Activated T-helper 2 cell treated with anti-CD3 and anti-CD28 coated beads, Interferon-gamma antibody, Interleukin-2, Interleukin-4, amounts not matched to agents 10 μg/mL and 5 μg/mL and 100 μg/mL, durations not matched to agents 14 hours and 24 hours and 36 hours (primary cell): ENCODE measurements at regions of chr1 and their contacts with region 1.

Region 1: GRCh38 chr1:154352581-154353459 is 27.5 kb downstream of the ATP8B2 start:
- DNase-seq: peak; percentile 32
- H3K4me3 Mint-ChIP-seq: peak overlapping the region; percentile 76
- H3K27ac Mint-ChIP-seq: peak overlapping the region; percentile 80
- H3K4me1 Mint-ChIP-seq: peaks cover 26% of the 10 kb centered on the region
- H3K27me3 Mint-ChIP-seq: peaks cover 3% of the 10 kb centered on the region

Region 2: DNA sequence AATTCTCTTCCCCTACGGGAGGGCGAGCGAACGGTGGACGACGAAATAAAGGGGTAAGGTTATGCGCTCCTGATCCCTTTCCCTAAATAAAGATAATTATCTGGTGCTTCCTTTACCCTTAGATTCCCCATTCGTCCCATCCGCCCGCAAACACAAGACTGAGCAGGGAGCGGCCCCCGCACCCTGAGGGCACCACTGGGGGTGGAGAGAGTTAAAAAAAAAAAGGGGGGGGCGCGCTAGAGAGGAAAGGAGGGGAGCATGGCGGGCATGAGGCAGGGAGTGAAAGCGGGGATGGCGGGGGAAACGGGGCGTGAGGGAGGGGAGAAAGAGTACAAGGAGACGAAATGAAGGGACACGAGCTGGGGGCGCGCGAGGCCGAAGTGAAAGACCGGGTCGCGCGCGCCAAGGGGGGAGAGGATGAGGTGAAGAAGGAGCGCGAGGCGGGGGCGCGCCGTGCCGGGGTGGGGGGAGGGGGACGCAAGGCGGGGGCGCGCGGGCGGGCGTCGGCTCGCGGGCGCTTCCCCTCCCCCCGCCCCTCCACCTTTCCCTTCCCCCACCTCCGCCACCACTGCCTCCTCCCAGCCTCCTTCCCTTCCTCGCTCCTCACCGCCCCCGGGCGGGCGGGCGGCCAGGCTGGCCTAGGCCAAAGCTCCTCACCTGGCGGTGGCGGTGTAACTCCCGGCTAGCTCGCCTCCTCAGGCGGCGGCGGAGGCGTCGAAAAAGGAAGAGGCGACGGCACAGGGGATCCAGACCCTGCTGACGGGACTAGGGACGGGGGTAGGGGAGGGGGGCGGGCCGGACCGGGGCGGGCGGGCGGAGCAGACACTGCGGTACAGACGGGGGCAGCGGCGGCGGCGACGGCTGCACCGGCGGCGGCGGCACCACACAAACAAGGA is 430.5 kb before region 1 on chr1:
- intact Hi-C with region 1: no loop called
- DNase-seq: no peak
- H3K4me3 Mint-ChIP-seq: peak overlapping the region; percentile 94
- H3K27ac Mint-ChIP-seq: peak overlapping the region; percentile 94
- H3K4me1 Mint-ChIP-seq: peaks cover 34% of the 10 kb centered on the region
- H3K27me3 Mint-ChIP-seq: no peaks in the 10 kb centered on the region

Region 3: GRCh38 chr1:154324669-154325582 is 27.9 kb before region 1 on chr1 and contains the start of gene ATP8B2:
- intact Hi-C with region 1: loop called (anchors 1 kb)
- DNase-seq: peak; percentile 77
- H3K4me3 Mint-ChIP-seq: peak within 1 kb of the TSS; percentile 95
- H3K27ac Mint-ChIP-seq: peak within 1 kb of the TSS; percentile 89
- H3K4me1 Mint-ChIP-seq: peaks cover 33% of the 10 kb centered on the region
- H3K27me3 Mint-ChIP-seq: peaks cover 18% of the 10 kb centered on the region
- total RNA-seq, gene ATP8B2: 44.0 and 47.0 TPM in 2 replicates

Region 4: DNA sequence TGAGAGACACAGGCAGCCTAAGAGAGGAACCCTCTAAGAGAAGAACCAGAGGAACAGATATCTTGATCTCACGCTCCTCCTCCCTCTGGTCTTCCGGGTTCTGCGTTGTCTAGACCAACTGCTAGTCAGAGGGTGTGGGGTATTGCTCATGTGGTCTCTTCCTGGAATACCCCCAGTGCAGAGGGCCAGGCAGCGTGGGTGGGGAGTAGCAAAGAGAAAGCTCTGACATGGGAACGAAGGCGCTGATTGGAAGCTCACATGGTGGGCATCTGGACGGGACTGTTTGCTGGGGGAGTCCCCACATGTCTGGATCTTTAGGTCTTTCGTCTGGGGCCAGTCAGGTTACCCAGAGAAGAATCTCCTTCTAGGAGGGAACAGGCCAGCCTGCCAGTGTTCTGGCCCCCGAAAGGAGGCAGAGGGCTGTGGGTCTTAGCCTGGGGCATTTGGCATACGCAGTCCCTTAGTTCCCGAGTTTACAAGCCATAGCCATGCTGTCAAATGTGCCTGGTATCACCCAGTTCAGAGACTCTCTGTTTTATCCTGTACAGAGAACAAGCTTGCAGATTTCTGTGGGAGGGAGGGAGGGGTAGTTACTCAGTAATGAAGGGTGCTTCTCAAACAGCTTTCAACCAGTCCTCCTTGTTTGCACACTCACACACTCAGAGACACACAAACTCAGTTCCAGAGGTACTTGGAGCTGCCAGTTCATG is 34.0 kb after region 1 on chr1:
- intact Hi-C with region 1: loop called (anchors 5 kb)
- DNase-seq: peak; percentile 32
- H3K4me3 Mint-ChIP-seq: peak overlapping the region; percentile 57
- H3K27ac Mint-ChIP-seq: peak overlapping the region; percentile 91
- H3K4me1 Mint-ChIP-seq: peaks cover 22% of the 10 kb centered on the region
- H3K27me3 Mint-ChIP-seq: no peaks in the 10 kb centered on the region

Region 5: DNA sequence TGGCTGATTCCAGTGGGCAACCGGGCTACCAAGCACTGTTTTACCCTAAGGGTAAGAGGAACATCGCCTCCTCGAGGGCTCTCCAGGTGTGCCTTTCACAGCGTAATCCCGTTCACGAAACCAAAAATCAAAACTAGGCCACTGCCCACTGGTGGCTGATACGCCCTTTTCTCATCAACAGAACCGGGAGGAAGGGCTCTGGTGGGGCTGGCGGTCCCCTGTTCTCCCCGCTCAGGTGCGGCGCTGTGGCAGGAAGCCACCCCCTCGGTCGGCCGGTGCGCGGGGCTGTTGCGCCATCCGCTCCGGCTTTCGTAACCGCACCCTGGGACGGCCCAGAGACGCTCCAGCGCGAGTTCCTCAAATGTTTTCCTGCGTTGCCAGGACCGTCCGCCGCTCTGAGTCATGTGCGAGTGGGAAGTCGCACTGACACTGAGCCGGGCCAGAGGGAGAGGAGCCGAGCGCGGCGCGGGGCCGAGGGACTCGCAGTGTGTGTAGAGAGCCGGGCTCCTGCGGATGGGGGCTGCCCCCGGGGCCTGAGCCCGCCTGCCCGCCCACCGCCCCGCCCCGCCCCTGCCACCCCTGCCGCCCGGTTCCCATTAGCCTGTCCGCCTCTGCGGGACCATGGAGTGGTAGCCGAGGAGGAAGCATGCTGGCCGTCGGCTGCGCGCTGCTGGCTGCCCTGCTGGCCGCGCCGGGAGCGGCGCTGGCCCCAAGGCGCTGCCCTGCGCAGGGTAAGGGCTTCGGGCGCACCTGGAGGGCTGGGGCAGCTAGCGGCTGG is 52.4 kb after region 1 on chr1 and contains the start of gene IL6R:
- intact Hi-C with region 1: loop called (anchors 5 kb)
- DNase-seq: peak; percentile 48
- H3K4me3 Mint-ChIP-seq: peak within 1 kb of the TSS; percentile 73
- H3K27ac Mint-ChIP-seq: peak within 1 kb of the TSS; percentile 64
- H3K4me1 Mint-ChIP-seq: peaks cover 66% of the 10 kb centered on the region
- H3K27me3 Mint-ChIP-seq: peaks cover 6% of the 10 kb centered on the region
- total RNA-seq, gene IL6R: 1.6 and 2.2 TPM in 2 replicates

Region 6: GRCh38 chr1:154419620-154420571 is 67.1 kb after region 1 on chr1:
- intact Hi-C with region 1: no loop called
- DNase-seq: no peak
- H3K4me3 Mint-ChIP-seq: no peak overlapping the region
- H3K27ac Mint-ChIP-seq: peak overlapping the region; percentile 29
- H3K4me1 Mint-ChIP-seq: peaks cover 23% of the 10 kb centered on the region
- H3K27me3 Mint-ChIP-seq: no peaks in the 10 kb centered on the region

Region 7: DNA sequence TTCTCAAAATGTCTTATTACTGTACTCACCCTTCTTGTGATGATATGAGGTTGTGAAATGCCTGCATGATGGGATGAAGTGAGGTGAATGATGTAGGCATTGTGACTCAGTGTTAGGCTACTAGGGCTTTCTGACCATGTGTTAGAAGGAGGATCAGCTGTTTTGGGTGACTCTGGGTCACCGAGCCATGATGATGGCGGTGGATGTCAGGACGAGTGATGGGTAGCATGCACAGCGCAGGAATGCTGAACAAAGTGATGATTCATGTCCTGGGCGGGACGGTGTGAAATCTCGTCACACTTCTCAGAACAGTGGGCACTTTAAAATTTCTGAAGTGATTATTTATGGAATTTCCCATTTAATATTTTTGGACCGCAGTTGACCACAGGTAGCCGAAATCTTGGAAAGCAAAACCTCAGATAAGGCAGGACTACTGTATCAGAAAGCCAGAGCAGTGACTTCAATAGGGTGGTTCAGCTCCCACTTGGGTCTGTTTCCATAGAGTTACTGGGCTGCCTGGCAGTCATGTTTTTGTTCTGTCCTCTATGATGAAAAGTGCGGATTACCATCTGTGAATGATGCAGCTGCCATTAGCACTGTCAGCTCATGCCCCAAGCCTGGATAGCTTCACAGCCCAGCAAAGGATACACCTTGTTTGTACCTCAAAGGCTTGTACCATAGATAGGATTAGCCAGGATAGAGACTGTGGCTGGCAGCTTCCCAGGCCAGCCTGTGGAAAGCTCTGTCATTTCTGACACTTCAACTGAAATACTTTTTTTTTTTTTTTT is 79.0 kb after region 1 on chr1:
- intact Hi-C with region 1: no loop called
- DNase-seq: no peak
- H3K4me3 Mint-ChIP-seq: no peak overlapping the region
- H3K27ac Mint-ChIP-seq: peak overlapping the region; percentile 7
- H3K4me1 Mint-ChIP-seq: peaks cover 21% of the 10 kb centered on the region
- H3K27me3 Mint-ChIP-seq: no peaks in the 10 kb centered on the region

Region 8: GRCh38 chr1:154442006-154442740 is 89.4 kb after region 1 on chr1:
- intact Hi-C with region 1: loop called (anchors 5 kb)
- DNase-seq: no peak
- H3K4me3 Mint-ChIP-seq: no peak overlapping the region
- H3K27ac Mint-ChIP-seq: no peak overlapping the region
- H3K4me1 Mint-ChIP-seq: peaks cover 53% of the 10 kb centered on the region
- H3K27me3 Mint-ChIP-seq: peaks cover 4% of the 10 kb centered on the region

Region 9: DNA sequence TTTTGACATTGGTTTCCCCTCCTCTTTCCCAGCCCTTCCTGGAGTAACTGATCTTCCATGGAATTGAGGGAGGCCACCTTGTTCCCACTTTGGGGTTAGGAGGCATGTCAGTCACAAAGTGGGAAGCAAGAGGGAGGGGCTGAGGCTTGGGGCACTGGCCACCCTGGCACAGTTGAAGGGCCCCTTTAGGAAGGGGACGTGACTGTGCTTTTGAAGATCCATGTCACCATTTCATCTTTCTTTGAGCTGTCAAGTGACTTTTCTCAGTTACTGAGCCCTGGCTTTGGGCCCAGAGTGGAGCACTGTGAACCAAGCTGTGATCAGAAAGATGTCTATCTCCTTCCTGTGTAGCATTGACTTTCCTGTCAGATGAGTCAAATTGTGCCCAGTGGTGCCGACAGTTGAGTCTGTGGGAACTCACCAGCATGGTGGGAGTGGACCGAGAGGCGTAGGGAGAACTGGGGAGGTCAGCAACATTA is 110.7 kb after region 1 on chr1:
- intact Hi-C with region 1: loop called (anchors 2 kb)
- DNase-seq: peak; percentile 66
- H3K4me3 Mint-ChIP-seq: peak overlapping the region; percentile 11
- H3K27ac Mint-ChIP-seq: peak overlapping the region; percentile 67
- H3K4me1 Mint-ChIP-seq: peaks cover 57% of the 10 kb centered on the region
- H3K27me3 Mint-ChIP-seq: no peaks in the 10 kb centered on the region